Activated naive CD4-positive, alpha-beta T cell treated with anti-CD3 and anti-CD28 coated beads for 36 hours (primary cell): ENCODE measurements at regions of chr10 and their contacts with region 1.

Region 1: DNA sequence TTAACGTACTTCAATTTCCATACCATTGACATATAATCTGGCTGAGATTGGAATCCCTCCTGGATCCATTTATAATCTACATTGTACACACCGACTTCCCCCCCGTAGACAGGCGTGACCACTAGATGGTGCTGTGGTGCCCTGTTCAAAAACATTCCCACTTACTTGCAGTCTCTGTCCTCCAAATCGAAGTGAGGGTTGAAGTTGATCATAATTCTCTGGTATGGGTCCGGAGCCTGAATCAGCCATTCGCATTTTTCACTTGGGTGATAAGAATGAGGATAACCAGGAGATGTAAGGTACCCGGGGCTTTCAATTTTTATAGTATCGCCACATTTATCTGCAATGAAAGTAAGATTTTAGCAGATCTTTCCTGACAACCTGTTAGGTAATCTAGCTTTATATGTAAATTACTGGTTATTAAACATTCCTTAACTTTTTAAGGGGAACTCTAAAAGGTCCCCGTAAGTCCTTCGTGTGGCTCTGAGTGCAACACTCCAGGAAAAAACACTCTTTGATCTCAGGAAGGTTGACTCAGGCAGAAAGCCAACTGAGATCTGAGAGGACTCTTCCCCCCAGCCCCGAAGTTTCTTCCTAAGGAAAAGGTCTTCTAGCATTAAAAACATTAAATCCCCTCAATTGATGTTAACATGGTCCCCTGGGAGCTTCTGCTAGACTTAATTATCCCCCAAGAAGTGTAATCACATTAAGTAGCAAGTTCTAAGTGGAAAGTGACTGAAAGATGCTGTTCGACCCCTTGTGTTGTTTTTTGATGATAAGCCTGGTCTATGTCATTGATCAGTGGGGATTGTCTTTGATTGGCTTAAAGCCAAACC is 3.7 kb downstream of the NRP1 start:
- DNase-seq: peak; percentile 92
- H3K4me3 Mint-ChIP-seq: no peak overlapping the region
- H3K27ac Mint-ChIP-seq: no peak overlapping the region
- H3K4me1 Mint-ChIP-seq: peaks cover 16% of the 10 kb centered on the region
- H3K27me3 Mint-ChIP-seq: peaks cover 41% of the 10 kb centered on the region

Region 2: GRCh38 chr10:33087152-33087551 is 243.6 kb before region 1 on chr10:
- CTCF ChIA-PET with region 1: no interaction called
- intact Hi-C with region 1: no loop called
- DNase-seq: no peak
- H3K4me3 Mint-ChIP-seq: no peak overlapping the region
- H3K27ac Mint-ChIP-seq: no peak overlapping the region
- H3K4me1 Mint-ChIP-seq: peaks cover 16% of the 10 kb centered on the region
- H3K27me3 Mint-ChIP-seq: no peaks in the 10 kb centered on the region

Region 3: GRCh38 chr10:33416209-33416608 is 85.4 kb after region 1 on chr10:
- CTCF ChIA-PET with region 1: no interaction called
- intact Hi-C with region 1: loop called (anchors 5 kb)
- DNase-seq: peak; percentile 14
- H3K4me3 Mint-ChIP-seq: no peak overlapping the region
- H3K27ac Mint-ChIP-seq: no peak overlapping the region
- H3K4me1 Mint-ChIP-seq: no peaks in the 10 kb centered on the region
- H3K27me3 Mint-ChIP-seq: peaks cover 32% of the 10 kb centered on the region

Region 4: GRCh38 chr10:33509231-33509831 is 178.6 kb after region 1 on chr10:
- CTCF ChIA-PET with region 1: no interaction called
- intact Hi-C with region 1: loop called (anchors 10 kb)
- DNase-seq: peak; percentile 62
- H3K4me3 Mint-ChIP-seq: no peak overlapping the region
- H3K27ac Mint-ChIP-seq: no peak overlapping the region
- H3K4me1 Mint-ChIP-seq: peaks cover 3% of the 10 kb centered on the region
- H3K27me3 Mint-ChIP-seq: peaks cover 18% of the 10 kb centered on the region

Region 5: DNA sequence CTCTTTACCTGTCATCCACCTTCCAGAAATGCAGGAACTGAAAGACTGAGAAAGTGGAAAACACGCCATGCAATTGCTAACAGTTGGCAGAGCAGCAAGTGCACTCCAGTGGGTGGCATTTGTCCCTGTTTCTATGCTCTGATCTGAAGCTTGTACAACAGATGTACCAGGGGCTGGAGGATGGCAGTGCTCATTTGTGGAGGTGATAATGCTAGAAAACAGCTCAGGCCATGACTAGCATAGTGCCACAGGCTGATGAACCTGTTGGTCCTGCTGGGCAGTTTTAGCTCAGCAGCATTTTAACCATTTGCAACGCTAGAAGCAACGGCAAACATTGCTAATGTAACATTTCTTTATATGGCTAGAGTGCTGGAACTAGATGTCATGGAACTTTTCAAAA is 203.7 kb after region 1 on chr10:
- CTCF ChIA-PET with region 1: no interaction called
- intact Hi-C with region 1: no loop called
- DNase-seq: no peak
- H3K4me3 Mint-ChIP-seq: no peak overlapping the region
- H3K27ac Mint-ChIP-seq: no peak overlapping the region
- H3K4me1 Mint-ChIP-seq: no peaks in the 10 kb centered on the region
- H3K27me3 Mint-ChIP-seq: peaks cover 25% of the 10 kb centered on the region

Region 6: GRCh38 chr10:34280599-34281374 is 950.0 kb after region 1 on chr10:
- CTCF ChIA-PET with region 1: no interaction called
- intact Hi-C with region 1: loop called (anchors 1 kb)
- DNase-seq: peak; percentile 23
- H3K4me3 Mint-ChIP-seq: no peak overlapping the region
- H3K27ac Mint-ChIP-seq: peak overlapping the region; percentile 68
- H3K4me1 Mint-ChIP-seq: peaks cover 30% of the 10 kb centered on the region
- H3K27me3 Mint-ChIP-seq: peaks cover 6% of the 10 kb centered on the region